ENCODE measurements at regions of chr3 and their contacts with region 1.

Region 1: DNA sequence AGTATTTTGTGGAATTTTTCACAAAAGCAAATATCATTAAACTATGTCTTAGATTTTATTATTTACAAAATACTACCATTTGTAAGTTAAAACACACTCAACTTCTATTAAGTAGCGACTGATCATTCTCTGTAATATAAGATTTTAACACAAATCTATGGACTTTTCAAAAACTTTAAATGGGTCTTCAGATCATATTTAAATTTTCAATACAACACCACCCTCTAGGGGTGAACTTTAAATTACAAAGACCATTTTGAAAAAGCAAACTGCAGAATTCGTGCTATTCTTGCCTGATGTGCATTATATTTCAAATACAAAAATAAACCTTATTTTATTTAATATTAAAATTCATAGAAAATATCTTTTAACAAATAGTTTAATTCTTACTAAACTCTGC is 8.2 kb upstream of the VGLL4 start:
- DNase-seq: no peak
- H3K4me3 ChIP-seq: no peak overlapping the region
- H3K27ac ChIP-seq: no peak overlapping the region
- H3K4me1 ChIP-seq: peaks cover 0 to 8% (median 4%) of the 10 kb centered on the region in 4 donors
- H3K27me3 ChIP-seq: no peaks in the 10 kb centered on the region
- CTCF ChIP-seq: peak; percentile 30 to 47 (median 41)
- EP300 ChIP-seq: no peak
- POLR2A ChIP-seq: no peak

Region 2: GRCh38 chr3:11379233-11379823 is 272.6 kb before region 1 on chr3:
- intact Hi-C with region 1: loop called (anchors 1 kb)
- DNase-seq: no peak
- H3K4me3 ChIP-seq: no peak overlapping the region
- H3K27ac ChIP-seq: peak overlapping the region in 3 of 4 donors; percentile 15 to 53 (median 33)
- H3K4me1 ChIP-seq: peaks cover 0 to 31% (median 17%) of the 10 kb centered on the region in 4 donors
- H3K27me3 ChIP-seq: no peaks in the 10 kb centered on the region
- CTCF ChIP-seq: peak; percentile 56 to 61 (median 60)
- EP300 ChIP-seq: no peak
- POLR2A ChIP-seq: no peak